ENCODE measurements at regions of chr2 and their contacts with region 1.

Region 1: DNA sequence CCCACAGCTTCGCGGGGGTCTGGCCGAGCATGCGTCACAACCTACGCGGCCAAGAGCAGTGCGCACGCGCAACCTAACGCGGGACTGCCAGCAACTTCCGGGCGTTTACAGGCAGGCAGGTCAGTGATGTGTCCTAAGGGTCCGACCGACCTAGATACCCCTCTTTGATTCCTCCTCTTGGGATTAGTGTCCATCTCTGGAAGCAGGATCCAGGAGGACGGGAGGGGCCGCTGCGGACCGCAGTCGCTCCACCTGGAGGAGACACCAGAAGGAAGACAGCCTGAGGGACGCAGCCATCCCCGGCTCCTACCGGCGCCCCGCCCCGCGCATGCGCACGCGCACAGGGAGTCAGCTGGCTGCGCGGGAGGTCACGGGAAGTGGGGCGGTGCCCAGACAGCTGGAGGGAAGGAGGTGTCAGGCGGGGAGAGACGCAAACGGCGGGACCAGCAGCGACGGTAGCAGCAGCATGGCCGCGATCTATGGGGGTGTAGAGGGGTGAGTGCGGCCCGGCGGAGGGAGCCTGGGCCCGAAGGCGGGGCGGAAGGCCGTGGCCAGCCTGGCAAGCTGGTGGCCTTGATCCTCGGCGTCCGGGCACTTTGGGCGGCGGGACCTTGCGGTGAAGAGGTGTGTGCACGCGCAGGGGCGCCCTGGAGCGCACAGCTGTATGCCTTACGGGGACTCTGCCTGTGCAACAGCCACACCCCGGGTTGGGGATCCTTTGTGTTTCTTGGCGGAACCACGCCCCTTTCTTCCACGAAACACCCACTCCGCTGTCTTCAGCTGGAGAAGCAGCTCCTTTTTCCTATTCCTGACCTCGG is at the start of gene NAGK:
- DNase-seq: peak; percentile 95
- H3K4me3 Mint-ChIP-seq: peak within 1 kb of the TSS; percentile 96
- H3K27ac Mint-ChIP-seq: peak within 1 kb of the TSS; percentile 93
- H3K4me1 Mint-ChIP-seq: peaks cover 22% of the 10 kb centered on the region
- H3K27me3 Mint-ChIP-seq: no peaks in the 10 kb centered on the region
- CTCF ChIP-seq: no peak
- total RNA-seq, gene NAGK: 30.9 and 45.7 TPM in 2 replicates

Region 2: DNA sequence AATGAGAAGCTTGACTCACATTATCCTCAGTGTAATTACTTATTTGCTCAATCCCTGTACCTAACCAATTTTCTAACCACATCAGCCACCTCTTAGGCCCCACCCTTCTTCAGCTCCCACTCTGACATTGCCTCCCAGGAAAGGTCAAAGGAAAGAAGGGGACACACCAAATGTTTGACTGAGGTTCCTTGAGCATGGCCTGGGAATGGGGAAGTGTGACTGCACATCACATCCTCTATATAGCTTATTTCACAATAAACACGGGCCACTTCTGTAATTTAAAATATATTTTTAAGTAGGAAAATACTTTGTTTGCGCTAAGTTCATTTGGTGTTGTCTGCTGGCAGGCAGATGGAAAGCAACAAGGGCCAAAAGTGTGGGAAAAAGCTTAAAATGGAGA is 275.0 kb before region 1 on chr2:
- CTCF ChIA-PET with region 1: no interaction called
- POLR2A ChIA-PET with region 1: no interaction called
- intact Hi-C with region 1: no loop called
- DNase-seq: no peak
- H3K4me3 Mint-ChIP-seq: no peak overlapping the region
- H3K27ac Mint-ChIP-seq: no peak overlapping the region
- H3K4me1 Mint-ChIP-seq: peaks cover 5% of the 10 kb centered on the region
- H3K27me3 Mint-ChIP-seq: peaks cover 44% of the 10 kb centered on the region
- CTCF ChIP-seq: no peak

Region 3: GRCh38 chr2:71082402-71083252 is 14.2 kb after region 1 on chr2:
- CTCF ChIA-PET with region 1: interaction called, 4 read pairs
- POLR2A ChIA-PET with region 1: interaction called, 11 read pairs
- intact Hi-C with region 1: no loop called
- DNase-seq: no peak
- H3K4me3 Mint-ChIP-seq: no peak overlapping the region
- H3K27ac Mint-ChIP-seq: no peak overlapping the region
- H3K4me1 Mint-ChIP-seq: peaks cover 11% of the 10 kb centered on the region
- H3K27me3 Mint-ChIP-seq: peaks cover 10% of the 10 kb centered on the region
- CTCF ChIP-seq: no peak

Measured in MCF 10A (cell line).